ENCODE measurements at regions of chr6 and their contacts with region 1.

Region 1: DNA sequence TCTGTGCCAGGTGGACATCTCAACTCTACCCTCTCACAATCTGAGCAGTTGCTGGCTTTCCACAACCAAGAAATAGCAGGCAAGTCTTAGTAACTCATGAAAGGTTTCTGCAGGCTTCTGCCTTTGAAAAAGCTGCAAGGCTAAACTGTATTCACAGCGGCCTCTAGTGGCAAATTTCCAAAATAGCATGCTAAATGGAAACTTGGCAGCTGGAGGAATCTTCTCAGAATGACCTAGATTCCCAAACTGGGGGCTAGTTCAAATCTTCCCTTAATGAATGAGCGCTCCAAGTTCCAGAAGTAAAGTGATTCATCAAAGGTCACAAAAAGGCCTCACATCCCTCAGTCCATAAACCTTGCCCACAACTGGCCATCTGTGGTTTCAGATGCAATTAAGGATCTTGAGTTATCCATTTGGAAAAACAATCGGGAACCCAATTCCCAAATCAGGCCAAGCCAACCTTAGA is 11.9 kb upstream of the CPNE5 start:
- DNase-seq: no peak
- ATAC-seq: peak; percentile 56

Region 2: GRCh38 chr6:36765594-36766398 is 85.4 kb before region 1 on chr6:
- intact Hi-C with region 1: loop called (anchors 5 kb)
- DNase-seq: peak; percentile 93
- ATAC-seq: peak; percentile 91

Measured in sciatic nerve (tissue), 2 donors.